Mammary epithelial cell (primary cell): ENCODE measurements at regions of chr6 and their contacts with region 1.

Region 1: DNA sequence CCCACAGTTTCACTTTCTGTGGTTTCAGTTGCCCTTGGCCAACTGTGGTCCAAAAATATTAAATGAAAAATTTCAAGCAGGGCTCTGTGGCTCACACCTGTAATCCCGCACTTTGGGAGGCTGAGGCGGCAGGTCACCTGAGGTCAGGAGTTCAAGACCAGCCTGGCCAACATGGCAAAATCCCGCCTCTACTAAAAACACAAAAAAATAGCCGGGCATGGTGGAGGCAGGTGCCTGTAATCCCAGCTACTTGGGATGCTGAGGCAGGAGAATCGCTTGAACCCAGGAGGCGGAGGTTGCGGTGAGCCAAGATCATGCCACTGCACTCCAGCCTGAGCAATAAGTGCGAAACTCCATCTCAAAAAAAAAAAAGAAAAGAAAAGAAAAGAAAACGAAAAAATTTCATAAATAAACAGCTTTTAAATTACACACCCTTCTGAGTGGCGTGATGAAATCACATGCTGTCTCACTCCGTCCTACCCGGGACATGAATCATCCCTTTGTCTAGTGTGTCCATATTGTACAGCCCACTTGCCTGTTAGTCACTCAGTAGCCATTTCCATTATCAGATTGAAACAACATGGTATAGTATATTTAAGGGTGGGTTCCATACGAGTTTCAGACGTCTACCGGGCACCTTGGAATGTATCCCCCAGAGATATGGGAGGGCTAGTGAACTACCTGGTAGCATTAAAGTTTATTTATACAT is 11.7 kb downstream of the PTPRK start:
- DNase-seq: peak; percentile 95
- H3K4me3 ChIP-seq: peak overlapping the region in 1 of 3 experiments; percentile 30
- H3K27ac ChIP-seq: peak overlapping the region; percentile 96
- H3K4me1 ChIP-seq: peaks cover 54% of the 10 kb centered on the region
- H3K27me3 ChIP-seq: no peaks in the 10 kb centered on the region
- CTCF ChIP-seq: no peak

Region 2: GRCh38 chr6:128443553-128443952 is 65.2 kb before region 1 on chr6:
- CTCF ChIA-PET with region 1: interaction called, 22 read pairs
- dilution Hi-C with region 1: no loop called
- in situ Hi-C with region 1: no loop called
- intact Hi-C with region 1: no loop called
- DNase-seq: peak; percentile 45
- H3K4me3 ChIP-seq: no peak overlapping the region
- H3K27ac ChIP-seq: no peak overlapping the region
- H3K4me1 ChIP-seq: peaks cover 13% of the 10 kb centered on the region
- H3K27me3 ChIP-seq: no peaks in the 10 kb centered on the region
- CTCF ChIP-seq: no peak

Region 3: DNA sequence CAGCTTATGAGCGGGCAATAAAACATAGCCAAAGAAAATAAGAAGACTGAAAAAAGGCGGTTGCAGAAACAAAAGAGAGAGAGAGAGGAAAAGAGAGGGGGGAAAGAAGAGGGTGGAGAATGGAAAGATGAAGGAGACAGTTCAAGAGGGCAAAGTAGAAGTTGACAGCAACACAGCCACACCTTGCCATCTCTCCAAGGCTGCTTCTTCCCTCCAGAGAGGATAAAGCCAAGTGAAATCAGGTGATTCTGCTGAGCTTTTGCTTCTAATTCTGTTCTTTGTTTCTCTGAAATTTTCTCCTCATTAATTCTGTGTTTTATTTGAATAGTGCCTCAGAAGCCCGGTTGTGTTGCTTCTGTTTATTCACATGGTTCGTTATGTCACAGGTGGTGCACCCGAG is 36.8 kb before region 1 on chr6:
- CTCF ChIA-PET with region 1: interaction called, 21 read pairs
- dilution Hi-C with region 1: no loop called
- in situ Hi-C with region 1: no loop called
- intact Hi-C with region 1: no loop called
- DNase-seq: no peak
- H3K4me3 ChIP-seq: no peak overlapping the region
- H3K27ac ChIP-seq: no peak overlapping the region
- H3K4me1 ChIP-seq: peaks cover 7% of the 10 kb centered on the region
- H3K27me3 ChIP-seq: no peaks in the 10 kb centered on the region
- CTCF ChIP-seq: no peak

Region 4: DNA sequence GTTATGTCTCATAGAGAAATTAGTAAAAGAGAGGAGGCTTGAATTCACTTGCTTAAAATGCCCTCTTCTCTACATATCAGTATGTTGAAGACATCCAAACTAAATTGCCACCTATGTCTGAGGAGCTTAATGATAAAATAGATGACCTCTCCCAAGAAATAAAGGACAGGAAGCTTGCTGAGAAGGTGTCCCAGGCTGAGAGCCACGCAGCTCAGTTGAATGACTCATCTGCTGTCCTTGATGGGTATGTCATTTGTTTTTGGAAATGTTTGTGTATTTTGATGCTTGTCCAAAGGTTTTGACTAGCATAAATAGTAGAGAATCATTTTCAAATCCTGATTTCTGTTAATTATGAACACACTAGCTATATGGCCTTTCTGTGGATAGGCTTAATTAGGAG is 893.5 kb after region 1 on chr6:
- CTCF ChIA-PET with region 1: no interaction called
- dilution Hi-C with region 1: no loop called
- in situ Hi-C with region 1: no loop called
- intact Hi-C with region 1: no loop called
- DNase-seq: no peak
- H3K4me3 ChIP-seq: no peak overlapping the region
- H3K27ac ChIP-seq: no peak overlapping the region
- H3K4me1 ChIP-seq: no peaks in the 10 kb centered on the region
- H3K27me3 ChIP-seq: peaks cover 2% of the 10 kb centered on the region
- CTCF ChIP-seq: no peak